ENCODE measurements at regions of chr4 and their contacts with region 1.

Region 1: GRCh38 chr4:151291485-151291884 is 14.5 kb downstream of the PRSS48 start:
- DNase-seq: peak; percentile 58
- H3K4me3 ChIP-seq: no peak overlapping the region
- H3K27ac ChIP-seq: peak overlapping the region; percentile 16
- H3K4me1 ChIP-seq: peaks cover 10% of the 10 kb centered on the region
- H3K27me3 ChIP-seq: no peaks in the 10 kb centered on the region
- CTCF ChIP-seq: no peak

Region 2: DNA sequence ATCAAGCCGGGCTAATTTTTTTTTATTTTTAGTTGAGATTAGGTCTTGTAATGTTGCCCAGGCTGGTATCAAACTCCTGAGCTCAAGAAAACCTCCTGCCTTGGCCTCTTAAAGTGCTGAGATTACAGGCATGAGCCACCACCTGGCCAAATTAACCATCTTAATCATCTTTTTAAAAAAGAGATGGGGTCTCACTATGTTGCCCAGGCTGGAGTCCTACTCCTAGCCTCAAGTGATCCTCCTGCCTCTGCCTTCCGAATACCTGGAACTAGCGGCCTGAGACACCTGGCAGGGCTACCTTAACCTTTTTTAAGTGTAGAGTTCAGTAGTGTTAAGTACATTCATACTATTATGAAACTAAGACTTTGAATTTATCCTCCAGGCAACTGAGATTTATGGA is 193.7 kb before region 1 on chr4:
- CTCF ChIA-PET with region 1: no interaction called
- POLR2A ChIA-PET with region 1: interaction called, 12 read pairs
- intact Hi-C with region 1: no loop called
- DNase-seq: no peak
- H3K4me3 ChIP-seq: no peak overlapping the region
- H3K27ac ChIP-seq: no peak overlapping the region
- H3K4me1 ChIP-seq: peaks cover 10% of the 10 kb centered on the region
- H3K27me3 ChIP-seq: no peaks in the 10 kb centered on the region
- CTCF ChIP-seq: no peak

Region 3: DNA sequence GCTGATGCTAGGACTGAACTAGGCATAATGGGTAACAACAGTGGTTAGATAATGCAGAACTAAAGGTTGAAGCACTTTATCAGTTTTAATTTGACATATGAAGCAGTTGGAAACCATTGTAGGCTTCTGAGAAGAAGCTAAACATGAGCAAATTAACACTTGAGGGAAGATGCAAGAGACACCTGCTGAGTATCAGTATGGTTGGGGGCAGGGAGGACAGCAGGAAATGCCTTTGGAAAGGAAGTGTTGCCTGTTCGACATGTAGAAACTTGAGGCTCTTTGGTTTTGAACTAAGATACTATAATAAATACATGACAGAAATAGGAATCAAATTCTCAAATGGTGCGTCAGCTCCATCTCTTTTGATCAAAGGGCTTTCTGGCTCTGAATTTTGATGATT is 233.1 kb after region 1 on chr4:
- CTCF ChIA-PET with region 1: no interaction called
- POLR2A ChIA-PET with region 1: no interaction called
- intact Hi-C with region 1: no loop called
- DNase-seq: peak; percentile 33
- H3K4me3 ChIP-seq: no peak overlapping the region
- H3K27ac ChIP-seq: no peak overlapping the region
- H3K4me1 ChIP-seq: peaks cover 4% of the 10 kb centered on the region
- H3K27me3 ChIP-seq: no peaks in the 10 kb centered on the region
- CTCF ChIP-seq: no peak